ENCODE measurements at regions of chr14 and their contacts with region 1.

Region 1: GRCh38 chr14:63174760-63175211 is 29.5 kb upstream of the RHOJ start:
- DNase-seq: peak; percentile 91
- H3K4me3 ChIP-seq: no peak overlapping the region
- H3K27ac ChIP-seq: peak overlapping the region; percentile 19
- H3K4me1 ChIP-seq: peaks cover 36% of the 10 kb centered on the region
- H3K27me3 ChIP-seq: no peaks in the 10 kb centered on the region
- CTCF ChIP-seq: peak; percentile 76 to 79

Region 2: GRCh38 chr14:62957562-62957961 is 217.2 kb before region 1 on chr14:
- CTCF ChIA-PET with region 1: no interaction called
- dilution Hi-C with region 1: no loop called
- in situ Hi-C with region 1: no loop called
- intact Hi-C with region 1: loop called (anchors 5 kb)
- DNase-seq: peak; percentile 99
- H3K4me3 ChIP-seq: no peak overlapping the region
- H3K27ac ChIP-seq: no peak overlapping the region
- H3K4me1 ChIP-seq: peaks cover 15% of the 10 kb centered on the region
- H3K27me3 ChIP-seq: no peaks in the 10 kb centered on the region
- CTCF ChIP-seq: no peak

Region 3: DNA sequence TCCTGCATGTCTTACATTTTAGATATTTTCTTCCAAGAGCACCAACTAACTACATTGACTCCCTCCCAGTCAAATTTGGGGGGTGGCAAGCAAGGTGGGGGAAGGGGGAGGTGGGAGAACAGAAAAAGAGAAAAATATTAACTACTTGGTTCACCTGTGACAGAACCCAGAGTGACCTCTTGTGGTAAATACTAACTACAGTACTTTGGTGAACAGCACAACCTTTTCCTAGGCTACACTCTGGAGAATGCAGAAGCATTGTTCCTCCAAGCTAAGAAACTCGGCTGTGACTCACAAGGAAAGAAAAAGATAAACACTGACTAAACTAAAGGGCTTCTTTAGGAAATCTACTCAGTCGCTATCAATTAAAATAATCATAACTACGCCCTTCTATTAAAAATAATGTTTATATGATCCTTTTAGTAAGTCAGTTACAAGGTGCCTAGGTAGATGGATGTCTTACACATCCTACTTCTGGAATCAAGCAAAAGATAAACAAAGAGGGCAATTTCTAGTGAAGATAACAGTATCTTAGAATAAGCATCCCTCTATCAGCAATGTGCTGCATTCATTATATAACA is 134.9 kb before region 1 on chr14:
- CTCF ChIA-PET with region 1: no interaction called
- dilution Hi-C with region 1: no loop called
- in situ Hi-C with region 1: no loop called
- intact Hi-C with region 1: loop called (anchors 5 kb)
- DNase-seq: peak; percentile 74
- H3K4me3 ChIP-seq: no peak overlapping the region
- H3K27ac ChIP-seq: no peak overlapping the region
- H3K4me1 ChIP-seq: no peaks in the 10 kb centered on the region
- H3K27me3 ChIP-seq: no peaks in the 10 kb centered on the region
- CTCF ChIP-seq: peak; percentile 40 to 65

Region 4: GRCh38 chr14:63203618-63204406 is 29.0 kb after region 1 on chr14:
- CTCF ChIA-PET with region 1: no interaction called
- dilution Hi-C with region 1: no loop called
- in situ Hi-C with region 1: no loop called
- intact Hi-C with region 1: loop called (anchors 1 kb)
- DNase-seq: peak; percentile 93
- H3K4me3 ChIP-seq: peak overlapping the region; percentile 33 to 41 (median 36)
- H3K27ac ChIP-seq: peak overlapping the region; percentile 86
- H3K4me1 ChIP-seq: peaks cover 34% of the 10 kb centered on the region
- H3K27me3 ChIP-seq: no peaks in the 10 kb centered on the region
- CTCF ChIP-seq: peak in 1 of 2 donors; percentile 19

Region 5: GRCh38 chr14:63276492-63277342 is 101.9 kb after region 1 on chr14:
- CTCF ChIA-PET with region 1: interaction called, 7 read pairs
- dilution Hi-C with region 1: no loop called
- in situ Hi-C with region 1: loop called (anchors 5 kb)
- intact Hi-C with region 1: loop called (anchors 1 kb)
- DNase-seq: peak; percentile 65
- H3K4me3 ChIP-seq: no peak overlapping the region
- H3K27ac ChIP-seq: no peak overlapping the region
- H3K4me1 ChIP-seq: no peaks in the 10 kb centered on the region
- H3K27me3 ChIP-seq: no peaks in the 10 kb centered on the region
- CTCF ChIP-seq: peak; percentile 75 to 86

Region 6: GRCh38 chr14:63375771-63376170 is 201.0 kb after region 1 on chr14:
- CTCF ChIA-PET with region 1: no interaction called
- dilution Hi-C with region 1: no loop called
- in situ Hi-C with region 1: no loop called
- intact Hi-C with region 1: loop called (anchors 10 kb)
- DNase-seq: peak; percentile 63
- H3K4me3 ChIP-seq: no peak overlapping the region
- H3K27ac ChIP-seq: no peak overlapping the region
- H3K4me1 ChIP-seq: no peaks in the 10 kb centered on the region
- H3K27me3 ChIP-seq: no peaks in the 10 kb centered on the region
- CTCF ChIP-seq: no peak

Region 7: DNA sequence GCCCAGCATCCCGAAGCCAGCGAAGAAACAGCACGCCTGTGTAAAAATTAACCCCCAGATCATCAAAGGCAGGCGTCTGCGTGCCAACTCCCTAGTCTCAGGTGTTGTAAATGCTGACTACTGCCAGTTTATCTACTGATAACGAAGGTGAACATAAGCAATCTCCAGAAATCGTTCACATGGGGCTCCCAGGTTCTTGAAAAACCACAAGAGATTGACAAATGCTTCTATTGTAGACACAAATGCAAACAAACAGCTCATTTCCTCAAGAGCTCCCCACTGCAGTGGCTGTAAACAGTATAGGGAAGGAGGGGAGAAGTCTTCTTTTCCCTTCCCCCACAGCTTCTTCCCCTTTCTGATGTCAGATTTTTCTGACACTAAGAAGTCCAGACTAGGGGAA is 1524.1 kb after region 1 on chr14:
- CTCF ChIA-PET with region 1: no interaction called
- dilution Hi-C with region 1: no loop called
- in situ Hi-C with region 1: no loop called
- intact Hi-C with region 1: no loop called
- DNase-seq: no peak
- H3K4me3 ChIP-seq: no peak overlapping the region
- H3K27ac ChIP-seq: no peak overlapping the region
- H3K4me1 ChIP-seq: peaks cover 24% of the 10 kb centered on the region
- H3K27me3 ChIP-seq: no peaks in the 10 kb centered on the region
- CTCF ChIP-seq: no peak